ENCODE measurements at regions of chr2 and their contacts with region 1.

Region 1: GRCh38 chr2:190069936-190070696 is 7.6 kb upstream of the MSTN start:
- DNase-seq: peak; percentile 84

Region 2: DNA sequence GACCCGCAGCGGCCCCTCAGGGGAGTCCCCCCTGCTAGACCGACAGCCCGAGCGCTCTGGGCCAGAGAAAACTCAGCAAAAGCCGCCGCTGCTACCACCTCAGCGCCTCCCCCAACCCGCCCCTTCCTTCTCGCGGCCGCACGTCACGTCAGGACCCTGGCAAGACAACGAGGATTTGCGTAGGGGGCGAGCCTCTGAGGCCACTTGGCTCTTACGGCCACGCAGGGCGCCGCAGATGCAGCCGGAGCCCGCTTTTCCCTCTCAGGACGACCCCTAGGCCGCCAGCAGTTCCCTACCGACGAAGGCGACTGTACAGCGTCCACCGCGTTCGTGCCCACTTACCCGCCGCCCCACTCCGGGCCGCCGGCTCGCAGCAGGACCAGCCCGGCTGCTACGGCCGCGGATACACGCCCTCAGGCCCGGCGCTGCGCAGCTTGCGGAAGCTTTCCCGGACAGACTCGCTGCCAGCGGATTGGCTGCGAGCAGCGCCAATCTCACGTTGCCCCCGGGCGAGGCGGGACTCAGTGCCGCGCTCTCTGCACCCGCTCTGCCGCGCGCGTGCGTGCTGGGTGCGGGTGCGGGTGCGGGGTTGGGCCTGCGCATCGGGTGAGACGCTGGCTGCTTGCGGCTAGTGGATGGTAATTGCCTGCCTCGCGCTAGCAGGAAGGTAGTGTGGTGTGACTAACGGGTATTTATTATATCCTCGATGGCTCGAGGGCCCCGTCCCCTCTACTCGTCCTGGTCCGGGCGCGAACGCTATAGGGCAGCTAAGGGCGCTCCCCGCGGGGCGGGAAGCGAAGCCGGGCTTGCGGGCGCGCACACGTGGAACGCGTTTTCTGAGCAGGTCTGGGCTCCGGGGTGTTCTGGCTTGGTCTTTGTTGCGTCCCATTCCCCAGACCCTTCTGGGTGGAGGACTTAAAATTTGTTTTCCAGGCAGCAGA is 285.9 kb before region 1 on chr2 and contains the starts of genes ORMDL1 and PMS1:
- in situ Hi-C with region 1: loop called (anchors 25 kb)
- DNase-seq: peak; percentile 97